ENCODE measurements at regions of chr21 and their contacts with region 1.

Region 1: GRCh38 chr21:33825915-33826314 is 89.7 kb downstream of the ATP5PO start:
- DNase-seq: no peak
- H3K4me3 ChIP-seq: no peak overlapping the region
- H3K27ac ChIP-seq: peak overlapping the region; percentile 72 to 84
- H3K4me1 ChIP-seq: peaks cover 14 to 38% of the 10 kb centered on the region in 2 donors
- H3K27me3 ChIP-seq: no peaks in the 10 kb centered on the region
- CTCF ChIP-seq: no peak

Region 2: DNA sequence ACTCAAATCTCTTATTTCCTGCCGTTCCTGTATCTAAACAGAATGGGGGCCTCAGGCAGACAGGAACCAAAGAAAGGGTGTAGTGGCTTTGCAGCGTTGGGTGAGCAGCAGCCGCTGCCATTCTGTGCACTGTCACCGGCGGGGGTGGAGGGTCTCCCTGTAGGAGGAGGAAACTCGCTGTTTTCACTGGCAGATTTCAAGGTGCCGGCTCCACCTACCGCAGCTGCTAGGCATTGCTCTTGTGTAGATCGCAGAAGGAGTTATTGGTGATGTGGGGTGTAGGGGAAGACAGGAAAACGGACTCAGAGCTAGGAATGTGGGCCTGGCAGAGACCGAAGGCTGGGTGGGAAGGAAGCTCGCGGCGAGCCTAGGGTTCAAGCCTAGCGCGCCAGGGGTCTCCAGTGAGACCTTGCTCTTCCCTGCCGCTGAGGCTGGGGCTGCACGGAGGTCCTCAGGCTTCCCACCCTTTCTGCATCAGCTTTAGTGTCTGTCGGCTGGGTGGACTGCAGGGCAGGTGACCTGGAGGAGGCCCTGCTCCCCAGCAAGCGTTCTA is 68.9 kb after region 1 on chr21:
- intact Hi-C with region 1: loop called (anchors 5 kb)
- DNase-seq: peak; percentile 36 to 89
- H3K4me3 ChIP-seq: peak overlapping the region; percentile 44 to 64
- H3K27ac ChIP-seq: no peak overlapping the region
- H3K4me1 ChIP-seq: peaks cover 2 to 16% of the 10 kb centered on the region in 2 donors
- H3K27me3 ChIP-seq: no peaks in the 10 kb centered on the region
- CTCF ChIP-seq: peak; percentile 69 to 89 (median 81)